ENCODE measurements at regions of chr20 and their contacts with region 1.

Region 1: DNA sequence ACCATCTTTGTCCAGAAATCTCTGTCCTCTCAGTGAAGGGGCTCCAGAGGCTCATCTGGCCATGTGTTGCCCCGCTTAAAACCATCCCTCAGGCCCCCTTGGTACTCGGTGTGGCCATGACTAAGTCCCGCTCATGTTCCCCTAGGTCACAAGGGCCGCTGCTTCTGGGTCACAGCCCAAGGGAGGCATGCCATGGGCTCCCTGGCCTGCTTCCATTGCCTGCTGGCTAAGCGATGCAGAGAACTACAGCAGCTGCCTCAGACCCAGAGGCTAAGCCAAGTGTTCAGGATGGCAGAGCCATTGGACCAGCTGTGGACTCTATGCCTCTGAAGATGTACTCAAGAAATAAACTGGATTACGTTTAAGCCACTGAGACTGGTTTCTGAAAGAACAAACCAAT is 95.5 kb downstream of the ZFP64 start:
- DNase-seq: peak in 1 of 2 donors; percentile 17
- ATAC-seq: peak in 1 of 8 donors; percentile 71
- H3K4me3 ChIP-seq: no peak overlapping the region
- H3K27ac ChIP-seq: no peak overlapping the region
- H3K4me1 ChIP-seq: no peaks in the 10 kb centered on the region
- H3K27me3 ChIP-seq: no peaks in the 10 kb centered on the region
- CTCF ChIP-seq: no peak

Region 2: GRCh38 chr20:51800060-51800794 is 295.9 kb before region 1 on chr20:
- intact Hi-C with region 1: loop called in 1 of 10 experiments (anchors 10 kb)
- DNase-seq: peak; percentile 48 to 57
- ATAC-seq: peak; percentile 47 to 79 (median 66)
- H3K4me3 ChIP-seq: peak overlapping the region in 9 of 10 donors; percentile 29 to 59 (median 52)
- H3K27ac ChIP-seq: no peak overlapping the region
- H3K4me1 ChIP-seq: peaks cover 2 to 25% (median 19%) of the 10 kb centered on the region in 9 donors
- H3K27me3 ChIP-seq: peaks cover 0 to 83% (median 69%) of the 10 kb centered on the region in 7 donors
- CTCF ChIP-seq: peak; percentile 58 to 83 (median 79)

Region 3: GRCh38 chr20:52256454-52256853 is 160.3 kb after region 1 on chr20:
- intact Hi-C with region 1: no loop called
- DNase-seq: no peak
- ATAC-seq: no peak
- H3K4me3 ChIP-seq: no peak overlapping the region
- H3K27ac ChIP-seq: no peak overlapping the region
- H3K4me1 ChIP-seq: no peaks in the 10 kb centered on the region
- H3K27me3 ChIP-seq: peaks cover 0 to 17% (median 0%) of the 10 kb centered on the region in 7 donors
- CTCF ChIP-seq: no peak

Measured in heart right ventricle (tissue), 16 donors.